K562 (cell line): ENCODE measurements at regions of chr7 and their contacts with region 1.

Region 1: DNA sequence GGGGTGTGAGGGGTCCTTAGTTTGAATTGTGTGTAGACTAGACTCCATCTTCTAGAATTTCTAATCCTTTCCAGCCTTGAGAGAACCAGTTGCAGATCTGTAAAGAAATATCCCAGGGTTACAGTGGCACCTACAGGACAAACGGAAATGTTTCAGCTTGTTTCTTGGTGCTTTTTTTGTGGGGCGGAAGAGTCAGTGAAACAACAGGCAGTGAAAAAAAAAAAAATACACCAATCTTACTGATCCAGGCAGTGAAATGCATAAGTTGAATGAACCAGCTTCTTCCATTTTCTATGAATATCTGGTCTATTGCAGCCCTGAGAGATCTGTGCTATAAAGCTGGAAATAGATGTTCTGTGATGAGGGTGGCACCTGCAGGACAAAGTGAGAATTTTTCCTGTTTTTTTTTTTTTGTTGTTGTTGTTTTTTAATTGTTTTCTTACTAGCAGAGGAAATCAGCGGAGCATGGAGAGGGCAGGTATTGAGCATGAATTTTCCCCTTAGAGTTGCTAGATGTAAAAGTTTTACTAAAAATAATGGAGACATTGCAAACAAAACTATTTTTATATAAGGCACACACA is 81.9 kb upstream of the DYNC1I1 start:
- DNase-seq: peak; percentile 23 to 45 (median 34)
- ATAC-seq: peak; percentile 86
- H3K4me3 ChIP-seq: no peak overlapping the region
- H3K27ac ChIP-seq: no peak overlapping the region
- H3K4me1 ChIP-seq: no peaks in the 10 kb centered on the region
- H3K27me3 ChIP-seq: no peaks in the 10 kb centered on the region
- CTCF ChIP-seq: peak; percentile 64 to 75 (median 65)
- EP300 ChIP-seq: no peak
- POLR2A ChIP-seq: no peak
- RAD21 ChIP-seq: peak; percentile 67 to 81

Region 2: GRCh38 chr7:95425694-95426093 is 264.8 kb before region 1 on chr7:
- CTCF ChIA-PET with region 1: no interaction called
- POLR2A ChIA-PET with region 1: no interaction called
- in situ Hi-C with region 1: no loop called
- intact Hi-C with region 1: no loop called
- DNase-seq: no peak
- ATAC-seq: no peak
- H3K4me3 ChIP-seq: no peak overlapping the region
- H3K27ac ChIP-seq: no peak overlapping the region
- H3K4me1 ChIP-seq: no peaks in the 10 kb centered on the region
- H3K27me3 ChIP-seq: no peaks in the 10 kb centered on the region
- CTCF ChIP-seq: no peak
- EP300 ChIP-seq: no peak
- POLR2A ChIP-seq: no peak
- RAD21 ChIP-seq: no peak

Region 3: GRCh38 chr7:95527033-95527775 is 163.3 kb before region 1 on chr7:
- CTCF ChIA-PET with region 1: interaction called, 50 read pairs
- POLR2A ChIA-PET with region 1: interaction called, 4 read pairs
- in situ Hi-C with region 1: no loop called
- intact Hi-C with region 1: loop called (anchors 1 kb)
- DNase-seq: peak; percentile 72 to 78 (median 74)
- ATAC-seq: peak; percentile 98
- H3K4me3 ChIP-seq: no peak overlapping the region
- H3K27ac ChIP-seq: no peak overlapping the region
- H3K4me1 ChIP-seq: peaks cover 0 to 4% of the 10 kb centered on the region in 2 experiments; a peak in 1 of 5 replicates
- H3K27me3 ChIP-seq: peaks cover 0 to 5% of the 10 kb centered on the region in 2 experiments; a peak in 1 of 5 replicates
- CTCF ChIP-seq: peak; percentile 79 to 93 (median 91)
- EP300 ChIP-seq: no peak
- POLR2A ChIP-seq: no peak
- RAD21 ChIP-seq: peak; percentile 96 to 97

Region 4: GRCh38 chr7:95545078-95545498 is 145.4 kb before region 1 on chr7:
- CTCF ChIA-PET with region 1: interaction called, 12 read pairs
- POLR2A ChIA-PET with region 1: interaction called, 7 read pairs
- in situ Hi-C with region 1: no loop called
- intact Hi-C with region 1: no loop called
- DNase-seq: peak in 1 of 4 experiments; percentile 14
- ATAC-seq: peak; percentile 71
- H3K4me3 ChIP-seq: no peak overlapping the region
- H3K27ac ChIP-seq: no peak overlapping the region
- H3K4me1 ChIP-seq: 0 out of 5 replicates have a peak, but pooled peaks cover 0 to 6% of the 10 kb centered on the region in 2 experiments
- H3K27me3 ChIP-seq: no peaks in the 10 kb centered on the region; a peak in 2 of 5 replicates
- CTCF ChIP-seq: peak; percentile 39 to 68 (median 40); a peak in 4 of 6 replicates
- EP300 ChIP-seq: no peak
- POLR2A ChIP-seq: no peak
- RAD21 ChIP-seq: peak; percentile 82 to 88